Activated T-helper 2 cell treated with anti-CD3 and anti-CD28 coated beads, Interferon-gamma antibody, Interleukin-2, Interleukin-4, amounts not matched to agents 10 μg/mL and 5 μg/mL and 100 μg/mL, durations not matched to agents 14 hours and 24 hours and 36 hours (primary cell): ENCODE measurements at regions of chr2 and their contacts with region 1.

Region 1: GRCh38 chr2:181058378-181059269 is 78.2 kb downstream of the UBE2E3 start:
- DNase-seq: no peak
- H3K4me3 Mint-ChIP-seq: no peak overlapping the region
- H3K27ac Mint-ChIP-seq: no peak overlapping the region
- H3K4me1 Mint-ChIP-seq: peaks cover 7% of the 10 kb centered on the region
- H3K27me3 Mint-ChIP-seq: no peaks in the 10 kb centered on the region

Region 2: GRCh38 chr2:180124273-180125139 is 934.1 kb before region 1 on chr2:
- intact Hi-C with region 1: loop called (anchors 1 kb)
- DNase-seq: no peak
- H3K4me3 Mint-ChIP-seq: no peak overlapping the region
- H3K27ac Mint-ChIP-seq: no peak overlapping the region
- H3K4me1 Mint-ChIP-seq: peaks cover 2% of the 10 kb centered on the region
- H3K27me3 Mint-ChIP-seq: peaks cover 19% of the 10 kb centered on the region

Region 3: DNA sequence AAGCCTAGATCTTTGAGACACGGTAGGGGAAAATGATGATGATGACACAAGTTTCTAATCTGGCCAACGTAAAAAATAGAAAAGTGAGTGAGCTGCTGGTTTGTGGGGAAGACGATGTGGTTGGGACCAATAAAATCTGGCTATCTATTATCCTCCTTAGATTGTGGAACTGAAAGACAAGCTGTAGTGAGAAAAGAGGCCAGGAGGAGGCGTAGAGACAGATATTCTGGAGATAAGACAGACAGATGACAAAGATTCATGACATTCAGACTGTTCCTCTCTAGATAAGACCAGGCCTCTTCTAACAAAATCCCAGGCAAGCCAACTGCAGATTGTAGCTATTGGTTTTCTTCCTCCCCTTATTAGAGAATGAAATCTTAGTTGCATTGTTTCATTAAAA is 454.5 kb before region 1 on chr2:
- intact Hi-C with region 1: loop called (anchors 10 kb)
- DNase-seq: no peak
- H3K4me3 Mint-ChIP-seq: no peak overlapping the region
- H3K27ac Mint-ChIP-seq: no peak overlapping the region
- H3K4me1 Mint-ChIP-seq: peaks cover 2% of the 10 kb centered on the region
- H3K27me3 Mint-ChIP-seq: no peaks in the 10 kb centered on the region

Region 4: GRCh38 chr2:181046833-181047232 is 11.8 kb before region 1 on chr2:
- intact Hi-C with region 1: no loop called
- DNase-seq: no peak
- H3K4me3 Mint-ChIP-seq: no peak overlapping the region
- H3K27ac Mint-ChIP-seq: no peak overlapping the region
- H3K4me1 Mint-ChIP-seq: peaks cover 2% of the 10 kb centered on the region
- H3K27me3 Mint-ChIP-seq: no peaks in the 10 kb centered on the region